ENCODE measurements at regions of chr13 and their contacts with region 1.

Region 1: DNA sequence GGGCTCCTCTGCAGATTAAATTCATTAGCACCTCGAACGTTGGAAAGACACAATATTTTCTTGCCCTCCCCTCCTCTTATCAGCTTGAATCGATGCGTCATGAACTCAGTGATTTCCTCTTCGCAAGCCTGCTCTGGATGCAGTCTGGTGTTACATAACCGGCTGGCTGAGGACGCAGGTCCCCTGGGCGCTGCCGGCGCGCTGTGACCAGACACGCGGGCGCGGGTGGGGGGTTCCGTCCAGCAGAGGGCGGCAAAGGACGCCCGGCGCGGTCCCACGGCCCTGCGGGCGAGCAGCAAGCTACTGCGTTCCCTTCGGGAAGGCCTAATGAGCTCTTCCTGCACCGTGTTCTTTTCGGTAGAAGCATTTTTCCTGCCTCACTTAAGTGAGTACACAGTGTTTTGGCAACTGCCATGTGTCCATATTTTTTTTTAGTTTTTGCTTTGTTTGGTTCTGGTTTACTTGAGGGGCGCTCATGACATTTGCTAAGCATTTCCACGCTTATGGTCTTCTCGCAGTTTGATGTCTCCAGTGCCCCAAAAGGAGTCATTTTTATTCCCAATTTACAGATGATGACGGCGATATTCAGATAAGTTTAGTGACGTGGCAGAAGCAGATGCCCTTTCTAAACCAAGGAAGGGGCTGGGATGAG is 112.2 kb upstream of the MBNL2 start:
- DNase-seq: peak; percentile 83
- CTCF ChIP-seq: peak; percentile 98

Region 2: GRCh38 chr13:97344265-97345175 is 234.6 kb after region 1 on chr13:
- in situ Hi-C with region 1: loop called (anchors 10 kb)
- DNase-seq: peak; percentile 48
- CTCF ChIP-seq: peak; percentile 70

Measured in GM13977 (cell line).